Mammary epithelial cell (primary cell): ENCODE measurements at regions of chr16 and their contacts with region 1.

Region 1: GRCh38 chr16:78984887-78985464 is 615.6 kb downstream of the MAF start:
- DNase-seq: no peak
- H3K4me3 ChIP-seq: no peak overlapping the region
- H3K27ac ChIP-seq: no peak overlapping the region
- H3K4me1 ChIP-seq: peaks cover 31% of the 10 kb centered on the region
- H3K27me3 ChIP-seq: no peaks in the 10 kb centered on the region
- CTCF ChIP-seq: no peak

Region 2: DNA sequence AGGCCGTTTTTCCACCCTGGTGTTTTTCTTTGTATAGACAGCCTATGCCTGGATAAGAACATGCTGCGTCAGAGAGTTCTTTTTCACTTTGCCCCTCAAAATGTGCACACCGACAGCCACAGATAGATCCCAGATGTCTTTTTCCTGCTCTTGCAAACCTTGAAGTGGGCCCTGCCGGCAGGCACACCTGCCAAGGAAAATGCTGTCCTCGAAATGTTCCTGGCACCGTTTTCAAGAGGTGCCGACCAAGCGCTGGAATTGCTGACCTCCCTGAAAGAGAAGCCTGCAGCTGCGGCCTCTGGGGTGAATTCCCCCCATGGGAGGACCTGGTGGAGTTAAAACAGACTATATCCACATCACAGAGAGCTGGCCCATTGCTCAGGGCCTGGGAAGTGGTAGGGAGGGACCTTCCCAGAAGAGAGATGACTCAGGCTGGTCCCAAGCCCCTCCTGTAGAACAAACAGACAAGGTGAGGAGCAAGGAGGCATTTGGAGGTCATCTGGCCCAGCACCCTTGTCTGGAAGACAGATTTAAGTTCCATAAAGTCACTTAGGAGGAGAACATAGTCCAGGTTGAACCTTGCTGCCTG is 52.5 kb before region 1 on chr16:
- CTCF ChIA-PET with region 1: no interaction called
- dilution Hi-C with region 1: no loop called
- in situ Hi-C with region 1: no loop called
- intact Hi-C with region 1: no loop called
- DNase-seq: no peak
- H3K4me3 ChIP-seq: no peak overlapping the region
- H3K27ac ChIP-seq: no peak overlapping the region
- H3K4me1 ChIP-seq: no peaks in the 10 kb centered on the region
- H3K27me3 ChIP-seq: no peaks in the 10 kb centered on the region
- CTCF ChIP-seq: no peak

Region 3: GRCh38 chr16:79008036-79008868 is 23.3 kb after region 1 on chr16:
- CTCF ChIA-PET with region 1: no interaction called
- dilution Hi-C with region 1: no loop called
- in situ Hi-C with region 1: no loop called
- intact Hi-C with region 1: loop called (anchors 2 kb)
- DNase-seq: no peak
- H3K4me3 ChIP-seq: no peak overlapping the region
- H3K27ac ChIP-seq: peak overlapping the region; percentile 63
- H3K4me1 ChIP-seq: peaks cover 31% of the 10 kb centered on the region
- H3K27me3 ChIP-seq: no peaks in the 10 kb centered on the region
- CTCF ChIP-seq: no peak